ENCODE measurements at regions of chr14 and their contacts with region 1.

Region 1: GRCh38 chr14:74401504-74402241 is 24.3 kb downstream of the SYNDIG1L start:
- DNase-seq: peak; percentile 74
- ATAC-seq: peak; percentile 90
- H3K4me3 Mint-ChIP-seq: peak overlapping the region; percentile 87
- H3K27ac Mint-ChIP-seq: peak overlapping the region; percentile 98
- H3K4me1 Mint-ChIP-seq: peaks cover 54% of the 10 kb centered on the region
- H3K27me3 Mint-ChIP-seq: no peaks in the 10 kb centered on the region
- CTCF ChIP-seq: no peak

Region 2: DNA sequence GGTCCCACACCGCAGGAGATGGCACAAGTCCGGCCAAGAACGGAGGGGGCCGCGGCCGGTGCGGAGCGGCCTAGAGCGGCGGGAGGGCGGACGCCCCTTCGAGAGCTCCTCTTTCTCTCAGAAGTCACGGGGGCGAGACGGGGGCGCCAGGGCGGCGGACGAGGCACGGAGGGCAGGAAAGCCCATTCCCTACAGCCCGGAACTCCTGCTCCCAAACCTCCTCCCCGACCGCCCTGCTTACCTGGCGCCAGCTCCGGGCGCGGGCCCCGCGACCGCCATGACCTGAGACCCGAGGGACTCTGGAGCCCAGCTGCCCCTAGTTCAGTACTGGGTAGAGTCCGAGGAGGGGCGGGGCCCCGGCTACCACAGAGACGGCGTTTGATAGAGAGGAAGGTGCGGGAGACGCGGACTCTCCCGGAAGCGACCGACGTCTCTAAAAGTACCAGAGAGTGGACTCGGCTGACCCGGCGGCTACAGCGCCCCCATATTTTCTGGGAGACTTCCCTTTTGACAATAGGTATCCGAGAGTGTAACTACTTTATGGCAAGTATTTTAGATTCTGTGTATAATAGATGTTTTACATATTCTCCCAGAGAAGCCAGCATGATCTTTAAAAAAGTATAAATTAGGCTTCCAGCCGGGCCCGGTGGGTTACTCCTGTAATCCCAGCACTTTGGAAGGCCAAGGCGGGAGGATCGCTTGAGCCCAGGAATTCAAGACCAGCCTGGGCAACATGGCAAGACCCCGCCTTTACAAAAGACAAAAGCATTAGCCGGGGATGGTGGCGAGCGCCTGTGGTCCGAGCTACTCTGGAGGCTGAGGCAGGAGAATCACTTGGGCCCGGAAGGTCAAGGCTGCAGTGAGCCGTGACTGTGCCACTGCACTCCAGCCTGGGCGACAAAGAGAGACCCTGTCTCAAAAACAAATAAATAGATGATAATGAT is 98.8 kb before region 1 on chr14 and contains the start of gene ABCD4:
- CTCF ChIA-PET with region 1: no interaction called
- POLR2A ChIA-PET with region 1: no interaction called
- intact Hi-C with region 1: loop called (anchors 2 kb)
- DNase-seq: peak; percentile 84
- ATAC-seq: peak; percentile 97
- H3K4me3 Mint-ChIP-seq: peak within 1 kb of the TSS; percentile 96
- H3K27ac Mint-ChIP-seq: peak within 1 kb of the TSS; percentile 94
- H3K4me1 Mint-ChIP-seq: peaks cover 26% of the 10 kb centered on the region
- H3K27me3 Mint-ChIP-seq: no peaks in the 10 kb centered on the region
- CTCF ChIP-seq: no peak
- total RNA-seq, gene ABCD4: 58.2 and 78.4 TPM in 2 replicates